PC-3 (cell line): ENCODE measurements at regions of chr3 and their contacts with region 1.

Region 1: GRCh38 chr3:170055209-170055608 is 17.4 kb downstream of the GPR160 start:
- DNase-seq: peak; percentile 60
- ATAC-seq: peak; percentile 33; the same call in 1 of the 2 replicates
- H3K4me3 ChIP-seq: no peak overlapping the region
- H3K27ac ChIP-seq: no peak overlapping the region
- H3K4me1 ChIP-seq: peaks cover 17% of the 10 kb centered on the region
- H3K27me3 ChIP-seq: no peaks in the 10 kb centered on the region
- CTCF ChIP-seq: no peak

Region 2: GRCh38 chr3:169764452-169765274 is 290.5 kb before region 1 on chr3 and contains the start of gene TERC:
- CTCF ChIA-PET with region 1: no interaction called
- POLR2A ChIA-PET with region 1: no interaction called
- intact Hi-C with region 1: loop called (anchors 1 kb)
- DNase-seq: peak; percentile 97
- ATAC-seq: peak; percentile 85
- H3K4me3 ChIP-seq: peak within 1 kb of the TSS; percentile 81
- H3K27ac ChIP-seq: peak within 1 kb of the TSS; percentile 82
- H3K4me1 ChIP-seq: peaks cover 9% of the 10 kb centered on the region
- H3K27me3 ChIP-seq: no peaks in the 10 kb centered on the region
- CTCF ChIP-seq: no peak
- total RNA-seq, gene TERC: 544 and 737 TPM in 2 replicates

Region 3: DNA sequence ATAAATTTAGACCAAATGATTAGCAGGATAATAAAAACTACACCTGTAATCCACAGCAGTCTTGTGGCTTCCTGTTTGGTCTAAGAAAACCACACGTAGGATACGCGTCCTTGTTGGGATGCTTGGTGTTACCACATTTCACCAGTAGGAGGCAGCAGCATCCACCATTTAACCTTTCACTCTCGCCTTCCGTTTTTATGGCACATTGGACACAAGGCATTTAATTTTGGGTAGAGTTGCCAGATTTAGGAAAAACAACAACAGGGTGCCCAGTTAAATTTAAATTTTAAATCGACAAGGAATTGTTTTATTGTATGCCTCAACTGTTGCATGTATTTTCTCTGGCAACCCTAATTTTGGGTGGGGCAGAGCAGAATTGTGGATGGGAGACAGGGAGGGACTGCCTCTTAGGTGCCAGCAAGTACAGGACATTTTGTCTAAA is 191.7 kb before region 1 on chr3:
- CTCF ChIA-PET with region 1: no interaction called
- POLR2A ChIA-PET with region 1: no interaction called
- intact Hi-C with region 1: loop called (anchors 2 kb)
- DNase-seq: peak; percentile 92
- ATAC-seq: peak; percentile 89
- H3K4me3 ChIP-seq: no peak overlapping the region
- H3K27ac ChIP-seq: no peak overlapping the region
- H3K4me1 ChIP-seq: no peaks in the 10 kb centered on the region
- H3K27me3 ChIP-seq: no peaks in the 10 kb centered on the region
- CTCF ChIP-seq: peak; percentile 97

Region 4: DNA sequence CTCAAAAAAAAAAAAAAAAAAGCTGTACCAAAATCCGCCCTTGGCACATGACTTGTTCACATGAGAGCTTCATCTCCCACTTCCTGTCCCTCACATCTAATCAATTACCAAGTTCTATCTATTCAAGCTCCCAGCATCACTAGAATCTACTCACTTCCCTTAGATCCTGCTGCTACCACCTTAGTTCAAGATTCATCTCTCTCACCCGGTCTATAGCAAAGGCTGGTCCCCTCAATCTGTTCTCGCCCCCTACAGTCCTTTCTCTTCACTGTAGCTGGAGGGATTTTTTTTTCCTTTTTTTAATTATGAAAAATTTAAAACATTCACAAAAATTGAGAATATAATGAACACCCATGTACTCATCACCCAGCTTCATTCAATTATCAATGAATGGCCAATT is 34.1 kb before region 1 on chr3:
- CTCF ChIA-PET with region 1: no interaction called
- POLR2A ChIA-PET with region 1: interaction called, 15 read pairs
- intact Hi-C with region 1: no loop called
- DNase-seq: no peak
- ATAC-seq: no peak
- H3K4me3 ChIP-seq: no peak overlapping the region
- H3K27ac ChIP-seq: no peak overlapping the region
- H3K4me1 ChIP-seq: no peaks in the 10 kb centered on the region
- H3K27me3 ChIP-seq: no peaks in the 10 kb centered on the region
- CTCF ChIP-seq: peak; percentile 31; the same call in 1 of the 2 replicates